ENCODE measurements at regions of chr20 and their contacts with region 1.

Region 1: GRCh38 chr20:33531047-33531877 is 41.4 kb downstream of the CBFA2T2 start:
- DNase-seq: no peak
- H3K4me3 ChIP-seq: no peak overlapping the region
- H3K4me3 Mint-ChIP-seq: no peak overlapping the region
- H3K27ac ChIP-seq: no peak overlapping the region
- H3K27ac Mint-ChIP-seq: peak overlapping the region in 4 of 8 donors; percentile 2 to 72 (median 30)
- H3K4me1 ChIP-seq: no peaks in the 10 kb centered on the region
- H3K4me1 Mint-ChIP-seq: peaks cover 25 to 43% (median 37%) of the 10 kb centered on the region in 3 donors
- H3K27me3 ChIP-seq: no peaks in the 10 kb centered on the region
- H3K27me3 Mint-ChIP-seq: no peaks in the 10 kb centered on the region

Region 2: DNA sequence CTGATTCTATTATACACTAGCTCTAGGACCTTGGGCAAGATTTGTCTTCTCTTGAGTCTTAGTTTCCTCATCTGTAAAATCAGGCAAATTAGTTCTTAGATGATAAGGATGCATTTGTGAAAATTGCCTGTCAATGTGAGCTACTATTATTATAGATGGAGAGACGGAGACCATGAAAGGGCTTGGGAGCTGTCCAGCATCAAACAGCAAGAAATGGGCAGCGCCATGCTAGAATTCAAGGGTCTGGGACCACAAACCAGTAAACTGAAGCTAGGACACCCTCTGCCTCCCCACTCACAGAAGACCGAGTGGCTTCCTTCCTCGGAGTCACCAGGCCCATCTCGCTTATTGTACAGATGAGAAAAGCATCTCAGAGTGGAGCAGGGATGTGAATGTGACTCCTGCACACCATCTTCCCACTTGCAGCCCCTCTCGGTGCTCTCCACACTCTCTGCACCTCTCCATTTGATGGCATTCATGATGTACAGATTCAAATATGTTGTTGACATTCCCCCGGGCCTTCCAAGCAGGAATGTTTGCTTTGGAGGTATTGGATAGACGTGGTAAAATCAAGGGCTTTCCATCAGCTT is 338.3 kb before region 1 on chr20:
- CTCF ChIA-PET with region 1: no interaction called
- POLR2A ChIA-PET with region 1: no interaction called
- DNase-seq: no peak
- H3K4me3 ChIP-seq: no peak overlapping the region
- H3K4me3 Mint-ChIP-seq: no peak overlapping the region
- H3K27ac ChIP-seq: no peak overlapping the region
- H3K27ac Mint-ChIP-seq: no peak overlapping the region
- H3K4me1 ChIP-seq: no peaks in the 10 kb centered on the region
- H3K4me1 Mint-ChIP-seq: no peaks in the 10 kb centered on the region
- H3K27me3 ChIP-seq: no peaks in the 10 kb centered on the region
- H3K27me3 Mint-ChIP-seq: peaks cover 12 to 30% of the 10 kb centered on the region in 2 donors

Region 3: GRCh38 chr20:33875055-33875454 is 343.8 kb after region 1 on chr20:
- CTCF ChIA-PET with region 1: no interaction called
- POLR2A ChIA-PET with region 1: interaction called, 11 read pairs
- DNase-seq: no peak
- H3K4me3 ChIP-seq: no peak overlapping the region
- H3K4me3 Mint-ChIP-seq: no peak overlapping the region
- H3K27ac ChIP-seq: no peak overlapping the region
- H3K27ac Mint-ChIP-seq: peak overlapping the region in 1 of 8 donors; percentile 75
- H3K4me1 ChIP-seq: no peaks in the 10 kb centered on the region
- H3K4me1 Mint-ChIP-seq: no peaks in the 10 kb centered on the region
- H3K27me3 ChIP-seq: no peaks in the 10 kb centered on the region
- H3K27me3 Mint-ChIP-seq: peaks cover 0 to 5% of the 10 kb centered on the region in 2 donors

Region 4: DNA sequence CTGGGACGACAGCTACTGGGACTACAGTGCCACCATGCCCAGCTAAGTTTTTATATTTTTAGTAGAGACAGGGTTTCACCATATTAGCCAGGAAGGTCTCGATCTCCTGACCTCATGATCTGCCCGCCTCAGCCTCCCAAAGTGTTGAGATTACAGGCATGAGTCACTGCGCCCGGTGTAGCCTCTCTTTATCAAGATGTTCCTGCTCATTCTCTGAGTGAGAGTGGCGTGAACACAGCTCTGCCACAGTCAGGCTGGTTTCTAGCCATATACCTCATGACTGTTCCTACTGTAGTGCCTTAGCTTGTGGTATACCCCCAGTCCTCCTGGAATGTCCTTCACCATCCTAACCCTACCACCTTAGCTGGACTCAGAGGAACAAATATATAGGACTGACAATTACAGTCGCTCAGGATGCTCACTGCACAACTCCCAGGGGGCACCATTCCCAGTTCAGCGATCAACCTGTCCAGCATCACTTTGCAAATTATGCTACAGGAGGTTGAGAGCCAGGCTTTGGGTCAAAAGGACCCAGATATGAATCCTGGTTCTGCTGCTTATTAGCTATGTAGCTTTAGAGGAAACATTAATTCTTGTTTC is 366.2 kb after region 1 on chr20:
- CTCF ChIA-PET with region 1: no interaction called
- POLR2A ChIA-PET with region 1: no interaction called
- DNase-seq: no peak
- H3K4me3 ChIP-seq: no peak overlapping the region
- H3K4me3 Mint-ChIP-seq: no peak overlapping the region
- H3K27ac ChIP-seq: no peak overlapping the region
- H3K27ac Mint-ChIP-seq: peak overlapping the region in 1 of 8 donors; percentile 47
- H3K4me1 ChIP-seq: no peaks in the 10 kb centered on the region
- H3K4me1 Mint-ChIP-seq: no peaks in the 10 kb centered on the region
- H3K27me3 ChIP-seq: no peaks in the 10 kb centered on the region
- H3K27me3 Mint-ChIP-seq: peaks cover 14 to 34% of the 10 kb centered on the region in 2 donors